ENCODE measurements at regions of chr20 and their contacts with region 1.

Region 1: DNA sequence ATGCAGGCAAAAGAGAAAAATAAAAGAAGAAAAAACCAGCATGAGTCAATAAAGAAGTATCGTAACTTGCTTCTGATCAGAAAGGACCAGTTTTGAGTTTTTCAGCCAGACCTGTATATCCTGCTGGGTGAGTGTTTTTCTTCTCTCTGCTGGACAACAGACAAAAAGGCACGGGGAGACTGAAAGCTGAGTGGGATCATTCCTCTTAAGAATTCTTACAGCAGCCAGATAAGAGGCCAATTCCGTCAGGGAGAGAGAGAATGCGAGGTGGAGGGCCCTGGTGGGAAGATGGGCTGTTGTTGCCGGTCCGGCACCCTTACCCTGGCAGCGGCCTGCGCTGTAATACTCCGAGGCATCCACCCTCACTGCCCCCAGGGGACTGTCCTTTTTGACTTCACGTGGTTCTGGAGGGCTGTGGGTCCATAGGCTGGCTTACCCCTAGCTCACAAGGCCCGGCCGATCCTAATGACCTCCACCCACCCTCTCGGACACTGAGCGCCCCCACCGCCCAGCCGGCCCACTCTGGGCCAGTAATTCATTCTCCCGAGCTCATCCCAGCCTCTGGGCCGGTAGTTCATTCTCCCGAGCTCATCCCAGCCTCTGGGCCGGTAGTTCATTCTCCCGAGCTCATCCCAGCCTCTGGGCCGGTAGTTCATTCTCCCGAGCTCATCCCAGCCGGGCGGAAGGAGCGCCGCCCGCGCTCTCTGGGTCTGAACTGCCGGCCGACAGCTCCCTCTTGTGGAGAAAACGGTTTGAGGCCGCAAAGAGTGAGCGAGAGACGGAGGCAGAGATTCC is 118.3 kb upstream of the SIRPA start:
- DNase-seq: peak; percentile 74
- H3K4me3 Mint-ChIP-seq: peak overlapping the region; percentile 69
- H3K27ac Mint-ChIP-seq: no peak overlapping the region
- H3K4me1 Mint-ChIP-seq: peaks cover 12% of the 10 kb centered on the region
- H3K27me3 Mint-ChIP-seq: peaks cover 3% of the 10 kb centered on the region

Region 2: GRCh38 chr20:1509237-1509636 is 267.6 kb before region 1 on chr20:
- intact Hi-C with region 1: loop called (anchors 1 kb)
- DNase-seq: no peak
- H3K4me3 Mint-ChIP-seq: no peak overlapping the region
- H3K27ac Mint-ChIP-seq: no peak overlapping the region
- H3K4me1 Mint-ChIP-seq: no peaks in the 10 kb centered on the region
- H3K27me3 Mint-ChIP-seq: peaks cover 45% of the 10 kb centered on the region

Region 3: DNA sequence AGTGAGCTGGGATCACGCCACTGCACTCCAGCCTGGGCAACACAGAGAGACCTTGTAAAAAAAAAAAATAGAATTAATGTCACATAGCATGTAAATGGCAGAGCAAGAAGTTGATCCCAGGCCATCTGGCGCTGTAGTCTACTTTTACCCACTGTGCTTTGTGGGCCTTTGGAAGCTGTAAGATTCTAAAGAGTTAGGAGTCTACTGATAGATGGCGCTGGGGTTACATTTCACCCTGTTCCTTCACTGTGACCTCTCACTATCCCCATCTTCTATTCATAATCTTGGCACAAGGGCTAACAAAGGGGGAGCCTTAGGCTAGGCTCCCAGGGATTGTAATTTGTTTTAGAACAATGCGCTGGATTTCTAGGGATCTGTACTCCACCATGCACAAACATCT is 243.8 kb before region 1 on chr20:
- intact Hi-C with region 1: loop called (anchors 5 kb)
- DNase-seq: no peak
- H3K4me3 Mint-ChIP-seq: no peak overlapping the region
- H3K27ac Mint-ChIP-seq: no peak overlapping the region
- H3K4me1 Mint-ChIP-seq: peaks cover 6% of the 10 kb centered on the region
- H3K27me3 Mint-ChIP-seq: peaks cover 4% of the 10 kb centered on the region

Region 4: DNA sequence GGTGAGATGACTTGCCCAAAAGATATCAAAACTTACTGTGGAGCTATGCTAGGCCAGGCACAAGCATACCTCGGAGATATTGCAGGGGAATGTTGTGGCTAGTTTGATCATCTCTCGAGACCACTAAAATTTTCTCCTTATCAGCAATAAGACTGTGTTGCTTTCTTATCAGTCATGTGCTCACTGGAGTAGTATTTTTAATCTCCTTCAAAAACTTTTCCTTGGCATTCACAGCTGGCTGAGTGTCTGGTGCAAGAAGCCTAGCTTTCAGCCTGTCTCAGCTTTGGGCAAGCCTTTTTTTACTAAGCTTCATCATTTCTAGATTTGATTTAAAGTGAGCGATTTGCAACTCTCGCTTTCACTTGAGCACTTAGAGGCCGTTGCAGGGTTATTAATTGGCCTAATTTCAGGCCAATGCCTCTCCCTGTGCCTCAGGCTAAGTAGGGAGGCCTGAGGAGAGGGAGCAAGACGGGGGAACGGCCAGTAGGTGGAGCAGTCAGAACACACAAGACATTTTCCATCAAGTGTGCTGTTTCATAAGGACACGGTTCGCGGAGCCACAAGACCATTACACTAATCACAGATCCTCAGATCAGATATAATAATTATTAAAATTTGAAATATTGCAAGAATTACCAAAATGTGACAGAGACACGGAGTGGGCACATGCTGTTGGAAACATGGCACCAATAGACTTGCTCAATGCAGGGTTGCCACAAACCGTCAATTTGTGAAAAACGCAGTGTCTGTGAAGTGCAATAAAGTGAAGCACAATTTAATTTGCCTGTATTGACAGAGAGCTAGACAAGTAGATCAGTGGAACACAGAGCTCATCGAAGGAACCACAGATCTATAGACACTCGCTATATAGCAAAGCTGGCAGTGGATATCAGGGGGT is 12.5 kb before region 1 on chr20:
- intact Hi-C with region 1: loop called (anchors 1 kb)
- DNase-seq: peak; percentile 36
- H3K4me3 Mint-ChIP-seq: no peak overlapping the region
- H3K27ac Mint-ChIP-seq: no peak overlapping the region
- H3K4me1 Mint-ChIP-seq: no peaks in the 10 kb centered on the region
- H3K27me3 Mint-ChIP-seq: peaks cover 20% of the 10 kb centered on the region

Region 5: GRCh38 chr20:2005831-2006426 is 229.1 kb after region 1 on chr20:
- intact Hi-C with region 1: no loop called
- DNase-seq: peak; percentile 55
- H3K4me3 Mint-ChIP-seq: no peak overlapping the region
- H3K27ac Mint-ChIP-seq: no peak overlapping the region
- H3K4me1 Mint-ChIP-seq: no peaks in the 10 kb centered on the region
- H3K27me3 Mint-ChIP-seq: peaks cover 2% of the 10 kb centered on the region